CD8-positive, alpha-beta T cell (primary cell): ENCODE measurements at regions of chr5 and their contacts with region 1.

Region 1: GRCh38 chr5:126837906-126838539 is 61.1 kb downstream of the LMNB1 start:
- DNase-seq: peak in 2 of 9 experiments; percentile 37 to 41
- ATAC-seq: no peak
- H3K4me3 ChIP-seq: no peak overlapping the region
- H3K4me3 Mint-ChIP-seq: no peak overlapping the region
- H3K27ac ChIP-seq: no peak overlapping the region
- H3K27ac Mint-ChIP-seq: no peak overlapping the region
- H3K4me1 ChIP-seq: no peaks in the 10 kb centered on the region
- H3K4me1 Mint-ChIP-seq: no peaks in the 10 kb centered on the region
- H3K27me3 ChIP-seq: no peaks in the 10 kb centered on the region
- H3K27me3 Mint-ChIP-seq: no peaks in the 10 kb centered on the region
- CTCF ChIP-seq: peak; percentile 60

Region 2: GRCh38 chr5:126852091-126852571 is 14.1 kb after region 1 on chr5:
- CTCF ChIA-PET with region 1: interaction called, 10 read pairs
- POLR2A ChIA-PET with region 1: interaction called, 15 read pairs
- intact Hi-C with region 1: no loop called
- DNase-seq: peak in 5 of 9 experiments; percentile 19 to 65 (median 48)
- ATAC-seq: peak; percentile 70
- H3K4me3 ChIP-seq: peak overlapping the region; percentile 1 to 47
- H3K4me3 Mint-ChIP-seq: peak overlapping the region; percentile 88
- H3K27ac ChIP-seq: peak overlapping the region; percentile 56 to 59
- H3K27ac Mint-ChIP-seq: peak overlapping the region; percentile 98
- H3K4me1 ChIP-seq: peaks cover 38% of the 10 kb centered on the region
- H3K4me1 Mint-ChIP-seq: peaks cover 70% of the 10 kb centered on the region
- H3K27me3 ChIP-seq: no peaks in the 10 kb centered on the region
- H3K27me3 Mint-ChIP-seq: no peaks in the 10 kb centered on the region
- CTCF ChIP-seq: no peak

Region 3: GRCh38 chr5:126872561-126873354 is 34.7 kb after region 1 on chr5:
- CTCF ChIA-PET with region 1: interaction called, 3 read pairs
- POLR2A ChIA-PET with region 1: no interaction called
- intact Hi-C with region 1: loop called in 1 of 2 experiments (anchors 5 kb)
- DNase-seq: no peak
- ATAC-seq: no peak
- H3K4me3 ChIP-seq: no peak overlapping the region
- H3K4me3 Mint-ChIP-seq: no peak overlapping the region
- H3K27ac ChIP-seq: no peak overlapping the region
- H3K27ac Mint-ChIP-seq: no peak overlapping the region
- H3K4me1 ChIP-seq: no peaks in the 10 kb centered on the region
- H3K4me1 Mint-ChIP-seq: peaks cover 12% of the 10 kb centered on the region
- H3K27me3 ChIP-seq: no peaks in the 10 kb centered on the region
- H3K27me3 Mint-ChIP-seq: no peaks in the 10 kb centered on the region
- CTCF ChIP-seq: no peak

Region 4: GRCh38 chr5:127040796-127041520 is 202.9 kb after region 1 on chr5:
- CTCF ChIA-PET with region 1: interaction called, 3 read pairs
- POLR2A ChIA-PET with region 1: no interaction called
- intact Hi-C with region 1: loop called (anchors 1 to 5 kb)
- DNase-seq: no peak
- ATAC-seq: no peak
- H3K4me3 ChIP-seq: no peak overlapping the region
- H3K4me3 Mint-ChIP-seq: no peak overlapping the region
- H3K27ac ChIP-seq: no peak overlapping the region
- H3K27ac Mint-ChIP-seq: no peak overlapping the region
- H3K4me1 ChIP-seq: no peaks in the 10 kb centered on the region
- H3K4me1 Mint-ChIP-seq: no peaks in the 10 kb centered on the region
- H3K27me3 ChIP-seq: no peaks in the 10 kb centered on the region
- H3K27me3 Mint-ChIP-seq: no peaks in the 10 kb centered on the region
- CTCF ChIP-seq: no peak

Region 5: DNA sequence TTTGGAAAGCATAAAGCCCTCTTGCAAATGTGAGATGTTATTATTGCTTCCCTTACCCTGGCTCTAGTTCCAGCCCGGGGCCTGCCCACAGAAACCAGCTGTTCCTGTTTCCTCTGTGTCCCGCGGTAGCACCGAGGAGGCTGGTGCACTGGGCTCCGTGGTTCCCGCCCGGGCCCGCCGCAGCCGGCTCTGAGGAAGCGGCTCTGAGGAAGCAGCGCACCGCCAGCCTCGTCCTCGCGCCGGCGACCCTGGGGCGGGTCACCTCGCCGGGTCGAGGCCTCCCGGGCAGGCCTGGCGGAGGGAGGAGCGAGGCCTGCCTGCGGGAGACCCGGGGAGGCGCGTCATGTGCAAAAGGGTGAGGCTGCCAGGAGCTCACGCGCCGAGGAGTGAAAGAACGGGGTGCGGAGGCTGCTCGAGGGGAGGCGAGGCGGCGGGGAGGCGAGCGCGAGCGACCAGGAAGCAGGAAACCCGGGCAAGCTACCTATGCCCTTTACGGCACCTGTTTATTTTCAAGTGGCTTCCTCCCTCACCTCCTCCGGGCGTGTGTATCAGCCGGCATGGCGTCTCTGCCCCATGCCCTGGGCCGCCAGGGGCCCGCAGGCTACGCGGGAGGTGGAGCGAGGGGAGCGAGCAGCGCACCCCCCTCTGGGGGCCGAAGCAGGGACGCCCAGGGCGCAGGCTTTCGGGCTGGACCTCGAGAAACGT is 391.3 kb after region 1 on chr5:
- CTCF ChIA-PET with region 1: interaction called, 5 read pairs
- POLR2A ChIA-PET with region 1: no interaction called
- intact Hi-C with region 1: loop called in 1 of 2 experiments (anchors 10 kb)
- DNase-seq: peak; percentile 9 to 82 (median 47)
- ATAC-seq: peak; percentile 84
- H3K4me3 ChIP-seq: peak overlapping the region; percentile 62 to 83
- H3K4me3 Mint-ChIP-seq: peak overlapping the region; percentile 84
- H3K27ac ChIP-seq: peak overlapping the region; percentile 62
- H3K27ac Mint-ChIP-seq: peak overlapping the region; percentile 89
- H3K4me1 ChIP-seq: peaks cover 8% of the 10 kb centered on the region
- H3K4me1 Mint-ChIP-seq: peaks cover 15% of the 10 kb centered on the region
- H3K27me3 ChIP-seq: no peaks in the 10 kb centered on the region
- H3K27me3 Mint-ChIP-seq: no peaks in the 10 kb centered on the region
- CTCF ChIP-seq: no peak

Region 6: DNA sequence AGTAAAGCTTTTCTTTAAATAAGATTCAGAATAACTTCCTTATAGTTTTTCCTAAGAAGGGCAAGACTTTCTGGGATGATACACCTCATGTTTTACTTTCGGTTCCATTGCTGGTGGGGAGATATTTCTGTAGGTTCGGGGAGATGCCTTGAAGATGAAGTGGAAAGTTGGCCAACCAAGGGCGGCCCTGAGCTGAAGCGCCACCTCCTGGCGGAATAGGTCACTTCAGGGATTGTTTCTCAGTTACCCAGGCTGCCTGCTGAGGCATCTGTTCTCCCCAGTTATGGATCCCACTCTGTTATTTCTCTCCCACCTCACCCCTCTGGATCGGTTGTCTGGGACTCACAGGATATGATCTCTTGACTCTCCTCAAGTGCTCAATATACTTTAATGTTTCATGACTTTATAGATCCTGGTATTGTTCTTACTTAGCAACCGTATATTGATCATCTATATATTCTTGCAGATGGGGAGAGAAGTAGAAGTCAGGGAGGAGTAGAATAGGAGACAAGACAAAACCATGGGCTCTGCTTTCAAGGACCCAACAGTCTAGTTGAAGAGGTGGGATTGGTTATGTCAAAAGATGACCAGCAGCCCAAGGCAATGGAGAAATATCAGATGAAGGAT is 475.9 kb after region 1 on chr5:
- CTCF ChIA-PET with region 1: interaction called, 37 read pairs
- POLR2A ChIA-PET with region 1: no interaction called
- intact Hi-C with region 1: loop called (anchors 1 kb)
- DNase-seq: peak; percentile 41 to 79 (median 62)
- ATAC-seq: peak; percentile 65
- H3K4me3 ChIP-seq: no peak overlapping the region
- H3K4me3 Mint-ChIP-seq: no peak overlapping the region
- H3K27ac ChIP-seq: no peak overlapping the region
- H3K27ac Mint-ChIP-seq: no peak overlapping the region
- H3K4me1 ChIP-seq: no peaks in the 10 kb centered on the region
- H3K4me1 Mint-ChIP-seq: no peaks in the 10 kb centered on the region
- H3K27me3 ChIP-seq: no peaks in the 10 kb centered on the region
- H3K27me3 Mint-ChIP-seq: no peaks in the 10 kb centered on the region
- CTCF ChIP-seq: peak; percentile 79

Region 7: DNA sequence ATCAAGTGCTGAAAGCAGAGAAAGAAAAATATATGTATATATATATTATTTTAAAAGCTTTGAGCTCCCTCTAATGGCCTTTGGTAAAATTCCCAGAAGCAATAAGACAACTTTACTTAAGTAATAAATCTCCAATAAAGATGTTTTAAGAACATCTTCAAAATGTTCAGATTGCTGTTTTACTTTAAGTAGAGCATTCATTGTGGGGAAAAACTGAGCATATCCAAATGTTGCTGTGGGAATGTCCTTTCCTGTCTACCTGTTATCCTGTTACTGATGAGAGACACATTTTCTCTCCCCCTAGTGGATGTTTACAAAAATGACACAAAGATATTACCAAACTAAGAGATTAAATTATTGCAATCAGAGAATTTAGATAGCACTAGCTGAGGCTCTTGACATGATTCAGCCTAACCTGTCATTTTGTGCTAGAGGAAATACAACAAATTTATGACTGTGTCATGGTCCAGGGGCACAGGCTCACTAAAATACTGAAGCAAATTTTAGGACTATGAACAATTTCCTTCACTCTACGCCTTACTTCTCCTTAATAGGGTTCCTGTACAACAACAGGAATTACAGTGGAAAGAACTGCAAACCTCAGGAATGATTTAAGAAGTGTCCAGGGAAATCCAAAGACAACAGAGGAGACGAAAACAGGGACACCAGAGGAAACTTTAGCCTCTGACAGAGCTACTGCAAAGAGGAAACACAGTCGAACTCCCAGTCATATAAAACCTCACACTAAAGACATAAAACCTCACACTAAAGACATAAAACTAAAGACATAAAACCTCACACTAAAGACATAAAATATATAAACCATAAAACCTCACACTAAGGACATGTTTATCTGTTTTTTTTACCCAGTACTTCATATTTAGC is 655.1 kb after region 1 on chr5:
- CTCF ChIA-PET with region 1: interaction called, 4 read pairs
- POLR2A ChIA-PET with region 1: no interaction called
- intact Hi-C with region 1: loop called (anchors 1 to 2 kb)
- DNase-seq: peak in 2 of 9 experiments; percentile 40 to 54
- ATAC-seq: peak; percentile 71
- H3K4me3 ChIP-seq: no peak overlapping the region
- H3K4me3 Mint-ChIP-seq: no peak overlapping the region
- H3K27ac ChIP-seq: no peak overlapping the region
- H3K27ac Mint-ChIP-seq: no peak overlapping the region
- H3K4me1 ChIP-seq: no peaks in the 10 kb centered on the region
- H3K4me1 Mint-ChIP-seq: no peaks in the 10 kb centered on the region
- H3K27me3 ChIP-seq: no peaks in the 10 kb centered on the region
- H3K27me3 Mint-ChIP-seq: peaks cover 27% of the 10 kb centered on the region
- CTCF ChIP-seq: peak; percentile 94